ENCODE measurements at regions of chr22 and their contacts with region 1.

Region 1: DNA sequence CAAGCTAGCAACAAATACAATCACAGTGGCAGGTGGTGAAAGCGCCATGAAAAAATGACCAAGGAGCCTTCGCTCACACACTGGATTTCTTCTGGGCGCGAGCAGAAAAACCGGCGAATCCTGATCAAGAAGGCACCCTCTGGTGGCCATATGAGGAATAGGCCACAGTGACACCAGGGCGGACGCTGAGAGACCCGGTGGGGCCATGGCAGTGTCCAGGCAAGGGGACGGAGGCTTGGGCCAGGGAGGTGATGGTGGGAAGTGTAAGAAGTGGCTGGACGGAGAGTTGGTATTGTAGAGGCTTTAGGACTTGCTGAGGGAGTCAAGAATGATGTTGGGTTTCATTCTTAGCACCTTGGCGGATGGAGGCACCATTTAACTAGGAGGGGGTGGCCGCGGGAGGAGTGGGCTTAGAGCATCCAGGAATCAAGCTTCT is 16.9 kb upstream of the RAC2 start:
- DNase-seq: peak; percentile 74
- H3K4me3 Mint-ChIP-seq: no peak overlapping the region
- H3K27ac Mint-ChIP-seq: no peak overlapping the region
- H3K4me1 Mint-ChIP-seq: peaks cover 22% of the 10 kb centered on the region
- H3K27me3 Mint-ChIP-seq: peaks cover 63% of the 10 kb centered on the region

Region 2: GRCh38 chr22:37043828-37044538 is 216.9 kb before region 1 on chr22:
- CTCF ChIA-PET with region 1: interaction called, 15 read pairs
- DNase-seq: peak; percentile 74
- H3K4me3 Mint-ChIP-seq: no peak overlapping the region
- H3K27ac Mint-ChIP-seq: no peak overlapping the region
- H3K4me1 Mint-ChIP-seq: peaks cover 15% of the 10 kb centered on the region
- H3K27me3 Mint-ChIP-seq: peaks cover 26% of the 10 kb centered on the region

Region 3: DNA sequence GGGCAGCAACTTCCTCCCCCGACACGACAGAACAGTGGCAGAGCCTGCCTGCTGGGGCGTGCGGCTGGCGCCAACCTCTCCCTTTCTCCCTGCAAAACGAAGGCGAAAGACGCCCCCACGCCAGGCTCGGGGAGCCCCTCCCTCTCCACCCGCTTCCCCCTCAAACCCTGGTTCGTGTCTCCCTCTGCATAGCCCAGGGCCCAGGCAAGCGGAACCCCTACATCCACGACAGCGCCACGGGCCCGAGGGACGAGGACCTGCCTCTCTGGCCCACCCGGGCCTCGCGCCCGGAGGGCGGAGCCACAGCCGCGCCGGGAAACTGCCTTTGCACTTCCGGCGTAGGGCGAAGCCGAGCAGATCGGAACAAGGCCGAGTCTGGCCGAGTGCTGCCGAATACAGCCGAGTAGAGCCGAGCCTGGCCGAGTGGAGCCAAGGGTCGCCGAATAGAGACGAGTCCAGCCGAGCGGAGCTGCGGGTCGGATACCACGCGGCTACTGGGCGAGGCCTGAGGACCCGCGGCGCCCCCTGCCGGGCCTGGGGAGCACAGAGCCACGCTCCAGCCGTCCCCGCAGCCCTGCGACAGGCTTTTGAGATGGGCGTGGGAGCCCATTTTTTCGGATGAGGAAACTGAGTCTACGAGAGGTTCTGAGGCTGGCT is 61.7 kb before region 1 on chr22:
- CTCF ChIA-PET with region 1: interaction called, 24 read pairs
- DNase-seq: peak; percentile 99
- H3K4me3 Mint-ChIP-seq: peak overlapping the region; percentile 83
- H3K27ac Mint-ChIP-seq: peak overlapping the region; percentile 95
- H3K4me1 Mint-ChIP-seq: peaks cover 46% of the 10 kb centered on the region
- H3K27me3 Mint-ChIP-seq: no peaks in the 10 kb centered on the region

Region 4: DNA sequence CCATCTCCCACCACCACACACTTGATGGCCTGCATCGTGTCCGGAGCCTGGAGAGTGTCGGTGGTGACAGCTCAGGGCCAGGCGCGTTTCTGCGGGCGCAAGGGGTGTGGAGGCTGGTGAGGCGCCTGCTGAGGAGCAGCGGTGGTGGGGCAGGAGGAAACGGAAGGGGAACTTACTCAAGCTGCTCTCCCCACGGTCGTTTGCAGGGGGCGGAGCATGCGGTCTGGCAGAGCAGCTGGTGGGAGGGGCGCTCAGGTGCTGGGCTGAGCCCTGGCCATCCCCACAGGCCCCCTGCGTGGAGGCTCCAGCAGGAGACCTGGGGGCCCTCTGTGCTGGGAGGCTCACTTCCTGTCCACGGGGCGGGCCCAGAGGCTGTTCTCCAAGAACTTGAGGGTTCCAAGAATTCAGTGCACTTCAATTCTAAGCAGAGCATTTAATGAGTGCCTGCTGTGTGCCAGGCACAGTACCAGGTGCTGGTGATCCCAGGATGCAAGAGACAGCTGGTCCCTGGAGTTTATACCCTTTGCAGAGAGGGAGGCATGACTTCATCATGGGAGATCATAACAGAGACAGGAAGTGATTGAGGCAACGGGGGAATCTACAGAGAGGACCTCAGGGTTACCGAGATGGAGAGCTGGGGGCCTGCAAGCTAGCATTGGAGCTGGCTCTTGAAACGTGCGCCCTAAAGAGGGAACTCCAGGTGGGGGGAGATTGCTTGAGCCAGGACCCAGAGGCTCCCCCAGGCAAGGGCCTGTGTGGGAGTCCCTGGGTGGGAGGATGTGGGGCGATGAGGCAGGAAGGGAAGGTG is 16.6 kb before region 1 on chr22 and contains the start of gene RAC2:
- CTCF ChIA-PET with region 1: interaction called, 134 read pairs
- DNase-seq: peak; percentile 96
- H3K4me3 Mint-ChIP-seq: peak within 1 kb of the TSS; percentile 100
- H3K27ac Mint-ChIP-seq: peak within 1 kb of the TSS; percentile 94
- H3K4me1 Mint-ChIP-seq: peaks cover 48% of the 10 kb centered on the region
- H3K27me3 Mint-ChIP-seq: peaks cover 9% of the 10 kb centered on the region

Region 5: DNA sequence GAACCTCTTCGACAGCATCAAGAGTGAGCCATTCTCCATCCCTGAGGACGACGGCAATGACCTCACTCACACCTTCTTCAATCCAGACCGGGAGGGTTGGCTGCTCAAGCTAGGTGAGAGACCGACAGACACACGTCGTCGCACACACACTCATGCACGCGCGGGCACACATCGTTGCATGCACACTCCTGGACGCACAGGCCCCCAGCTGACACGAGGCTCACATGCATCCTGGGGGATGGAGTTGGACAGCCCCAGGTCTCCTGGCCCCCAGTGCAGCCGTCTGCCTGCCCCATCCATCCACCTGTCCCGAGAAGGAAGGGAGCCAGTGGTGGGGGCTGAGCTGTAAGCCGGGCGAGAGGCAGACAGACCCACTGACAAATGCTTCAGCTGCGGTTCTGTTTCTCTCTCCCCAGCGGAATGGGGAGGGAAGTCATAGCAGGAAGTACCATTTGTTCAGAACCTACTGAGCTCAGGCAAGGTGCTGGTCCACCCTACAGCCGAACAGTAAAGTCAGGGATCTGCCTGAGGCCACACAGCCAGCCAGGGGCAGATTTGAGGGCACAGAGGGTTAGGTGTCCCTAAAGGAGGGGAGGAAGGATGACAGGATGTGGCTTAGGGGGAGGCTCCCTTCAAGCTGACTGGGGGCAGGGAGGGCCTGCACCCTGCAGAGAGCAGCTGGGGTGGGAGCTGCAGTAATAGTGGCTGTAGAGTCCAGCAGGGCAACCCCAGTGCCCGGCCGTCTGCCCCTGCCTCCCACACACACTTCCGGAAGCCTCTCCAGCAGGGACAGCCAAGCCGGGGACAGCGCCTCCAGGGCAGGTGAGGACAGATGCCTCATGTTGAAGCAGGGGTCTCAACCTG is 48.5 kb after region 1 on chr22:
- CTCF ChIA-PET with region 1: interaction called, 26 read pairs
- DNase-seq: peak; percentile 79
- H3K4me3 Mint-ChIP-seq: peak overlapping the region; percentile 68
- H3K27ac Mint-ChIP-seq: peak overlapping the region; percentile 100
- H3K4me1 Mint-ChIP-seq: peaks cover 87% of the 10 kb centered on the region
- H3K27me3 Mint-ChIP-seq: no peaks in the 10 kb centered on the region

Region 6: DNA sequence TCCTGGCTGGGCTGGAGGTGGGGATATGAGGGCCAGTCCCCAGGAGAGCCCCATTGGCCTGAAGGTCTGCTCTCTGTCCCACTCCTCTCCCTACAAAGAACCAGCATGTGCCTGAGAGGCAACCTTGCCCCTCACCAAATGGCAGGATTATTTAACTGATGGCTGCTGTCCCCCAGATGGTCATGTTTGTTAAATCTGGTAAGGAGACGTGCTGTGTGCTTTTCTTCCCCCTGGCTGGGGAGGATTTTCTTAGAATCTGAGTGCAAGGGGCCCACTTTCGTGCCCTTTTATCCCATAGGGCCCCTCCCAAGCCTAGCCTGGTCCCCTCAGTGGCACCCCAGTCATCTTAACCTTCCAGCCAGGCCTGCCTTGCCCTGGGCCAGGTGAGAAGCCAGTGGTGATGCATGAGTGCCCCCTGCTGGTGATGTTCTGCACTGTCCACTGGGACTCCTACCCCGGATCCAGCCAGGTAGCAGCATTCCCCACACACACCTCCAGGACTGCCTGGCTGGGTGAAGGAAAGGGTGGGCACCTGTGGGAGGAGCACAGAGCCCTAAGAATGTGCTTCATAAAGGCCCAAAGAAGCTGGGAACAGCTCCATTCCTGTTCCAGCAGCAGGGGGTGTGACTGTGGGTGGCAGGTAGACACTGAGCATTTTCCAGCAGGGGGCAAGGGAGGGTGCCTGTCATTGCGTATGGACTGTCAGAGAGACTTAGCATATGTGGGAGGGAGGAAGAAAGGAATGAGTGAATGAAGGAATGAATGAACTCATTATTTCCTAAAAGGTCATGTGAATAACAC is 196.4 kb after region 1 on chr22:
- CTCF ChIA-PET with region 1: interaction called, 28 read pairs
- DNase-seq: peak; percentile 92
- H3K4me3 Mint-ChIP-seq: no peak overlapping the region
- H3K27ac Mint-ChIP-seq: no peak overlapping the region
- H3K4me1 Mint-ChIP-seq: no peaks in the 10 kb centered on the region
- H3K27me3 Mint-ChIP-seq: peaks cover 9% of the 10 kb centered on the region

Measured in activated naive CD4-positive, alpha-beta T cell treated with anti-CD3 and anti-CD28 coated beads, Interleukin-2, amount 10 ng/mL, durations not matched to agents 7 days and 5 days (primary cell).